CD4-positive, alpha-beta memory T cell (primary cell): ENCODE measurements at regions of chr1 and their contacts with region 1.

Region 1: DNA sequence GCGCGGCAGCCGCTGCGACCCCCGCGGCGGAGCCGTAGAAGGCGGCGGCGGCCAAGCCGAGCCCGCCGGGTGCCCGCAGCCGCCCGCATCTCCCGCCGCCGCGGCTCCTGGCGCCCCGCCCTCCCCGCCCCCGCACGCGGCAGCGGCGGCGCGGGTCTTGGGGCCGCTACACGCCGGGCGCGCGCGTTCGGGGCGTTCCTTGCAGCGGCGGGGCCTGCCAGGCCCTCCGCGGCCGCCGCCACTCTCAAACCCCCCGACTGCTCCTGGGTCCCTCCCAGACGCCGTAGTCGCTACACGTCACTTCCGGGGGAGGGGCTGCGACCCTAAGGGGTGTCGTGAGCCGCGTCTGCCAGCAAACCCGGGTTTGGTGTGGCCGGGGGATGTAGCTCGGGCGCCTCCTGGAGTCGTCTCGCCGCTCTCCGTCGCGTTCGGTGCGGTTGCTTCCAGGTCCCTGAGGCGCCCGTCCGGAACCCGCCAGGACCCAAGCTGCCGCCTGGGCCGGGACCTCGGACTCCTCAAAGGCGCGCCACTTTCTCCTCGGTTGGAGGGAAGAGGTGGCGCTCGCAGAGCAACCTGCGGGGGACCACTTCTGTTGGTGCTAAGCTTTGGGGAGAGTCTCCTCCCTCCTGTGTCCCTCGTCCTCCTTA is at the start of gene ELK4:
- DNase-seq: peak; percentile 99
- H3K4me3 ChIP-seq: peak within 1 kb of the TSS; percentile 72 to 87
- H3K4me3 Mint-ChIP-seq: peak within 1 kb of the TSS; percentile 92 to 99 (median 96)
- H3K27ac ChIP-seq: peak within 1 kb of the TSS; percentile 83
- H3K27ac Mint-ChIP-seq: peak within 1 kb of the TSS; percentile 92 to 99 (median 98)
- H3K4me1 ChIP-seq: peaks cover 47% of the 10 kb centered on the region
- H3K4me1 Mint-ChIP-seq: peaks cover 23 to 50% (median 38%) of the 10 kb centered on the region in 4 donors
- H3K27me3 ChIP-seq: no peaks in the 10 kb centered on the region
- H3K27me3 Mint-ChIP-seq: no peaks in the 10 kb centered on the region
- total RNA-seq, gene ELK4: 166 to 194 TPM

Region 2: GRCh38 chr1:204411451-204412204 is 1220.2 kb before region 1 on chr1 and contains the start of gene PPP1R15B:
- CTCF ChIA-PET with region 1: no interaction called
- POLR2A ChIA-PET with region 1: no interaction called
- intact Hi-C with region 1: loop called (anchors 10 kb)
- DNase-seq: peak; percentile 98 to 99 (median 98)
- H3K4me3 ChIP-seq: peak within 1 kb of the TSS; percentile 67 to 99
- H3K4me3 Mint-ChIP-seq: peak within 1 kb of the TSS; percentile 98 to 99 (median 99)
- H3K27ac ChIP-seq: peak within 1 kb of the TSS; percentile 100
- H3K27ac Mint-ChIP-seq: peak within 1 kb of the TSS; percentile 99 to 100 (median 100)
- H3K4me1 ChIP-seq: peaks cover 7% of the 10 kb centered on the region
- H3K4me1 Mint-ChIP-seq: peaks cover 8 to 21% (median 13%) of the 10 kb centered on the region in 4 donors
- H3K27me3 ChIP-seq: no peaks in the 10 kb centered on the region
- H3K27me3 Mint-ChIP-seq: no peaks in the 10 kb centered on the region
- total RNA-seq, gene PPP1R15B: 78.0 to 81.1 TPM

Region 3: GRCh38 chr1:205284343-205285144 is 347.3 kb before region 1 on chr1:
- CTCF ChIA-PET with region 1: no interaction called
- POLR2A ChIA-PET with region 1: interaction called, 5 read pairs
- intact Hi-C with region 1: loop called (anchors 2 kb)
- DNase-seq: peak; percentile 88 to 97 (median 90)
- H3K4me3 ChIP-seq: peak overlapping the region; percentile 56 to 71
- H3K4me3 Mint-ChIP-seq: peak overlapping the region; percentile 74 to 89 (median 84)
- H3K27ac ChIP-seq: peak overlapping the region; percentile 62
- H3K27ac Mint-ChIP-seq: peak overlapping the region; percentile 86 to 98 (median 95)
- H3K4me1 ChIP-seq: peaks cover 87% of the 10 kb centered on the region
- H3K4me1 Mint-ChIP-seq: peaks cover 64 to 89% (median 78%) of the 10 kb centered on the region in 4 donors
- H3K27me3 ChIP-seq: no peaks in the 10 kb centered on the region
- H3K27me3 Mint-ChIP-seq: no peaks in the 10 kb centered on the region

Region 4: GRCh38 chr1:205528887-205529825 is 102.7 kb before region 1 on chr1:
- CTCF ChIA-PET with region 1: interaction called, 12 read pairs
- POLR2A ChIA-PET with region 1: interaction called, 13 read pairs
- intact Hi-C with region 1: loop called (anchors 1 kb)
- DNase-seq: peak; percentile 66 to 76 (median 69)
- H3K4me3 ChIP-seq: no peak overlapping the region
- H3K4me3 Mint-ChIP-seq: peak overlapping the region in 5 of 8 donors; percentile 26 to 73 (median 39)
- H3K27ac ChIP-seq: no peak overlapping the region
- H3K27ac Mint-ChIP-seq: peak overlapping the region in 1 of 7 donors; percentile 73
- H3K4me1 ChIP-seq: no peaks in the 10 kb centered on the region
- H3K4me1 Mint-ChIP-seq: peaks cover 0 to 5% (median 4%) of the 10 kb centered on the region in 4 donors
- H3K27me3 ChIP-seq: no peaks in the 10 kb centered on the region
- H3K27me3 Mint-ChIP-seq: peaks cover 3 to 4% of the 10 kb centered on the region in 2 donors

Region 5: DNA sequence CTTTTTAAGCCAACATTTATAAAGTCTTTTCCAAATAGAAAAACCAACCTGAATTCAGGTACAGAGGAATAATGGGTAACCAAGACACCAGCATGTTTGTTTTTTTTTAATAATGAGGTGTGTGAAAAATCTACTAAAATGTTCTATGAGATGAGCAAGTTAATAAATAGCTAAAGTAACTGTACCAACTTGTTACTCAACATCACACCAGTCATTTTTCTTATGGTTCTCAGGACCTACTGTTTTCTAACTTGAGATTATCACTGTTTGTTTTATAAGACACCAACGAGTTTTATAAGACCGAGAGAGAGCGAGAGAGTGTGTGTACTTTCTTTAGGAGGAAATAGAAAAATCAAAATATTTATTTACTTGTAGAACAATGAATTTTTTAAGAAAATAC is 12.5 kb before region 1 on chr1:
- CTCF ChIA-PET with region 1: interaction called, 9 read pairs
- POLR2A ChIA-PET with region 1: interaction called, 30 read pairs
- intact Hi-C with region 1: no loop called
- DNase-seq: no peak
- H3K4me3 ChIP-seq: no peak overlapping the region
- H3K4me3 Mint-ChIP-seq: no peak overlapping the region
- H3K27ac ChIP-seq: no peak overlapping the region
- H3K27ac Mint-ChIP-seq: peak overlapping the region in 1 of 7 donors; percentile 64
- H3K4me1 ChIP-seq: no peaks in the 10 kb centered on the region
- H3K4me1 Mint-ChIP-seq: peaks cover 17 to 25% (median 22%) of the 10 kb centered on the region in 4 donors
- H3K27me3 ChIP-seq: no peaks in the 10 kb centered on the region
- H3K27me3 Mint-ChIP-seq: no peaks in the 10 kb centered on the region

Region 6: DNA sequence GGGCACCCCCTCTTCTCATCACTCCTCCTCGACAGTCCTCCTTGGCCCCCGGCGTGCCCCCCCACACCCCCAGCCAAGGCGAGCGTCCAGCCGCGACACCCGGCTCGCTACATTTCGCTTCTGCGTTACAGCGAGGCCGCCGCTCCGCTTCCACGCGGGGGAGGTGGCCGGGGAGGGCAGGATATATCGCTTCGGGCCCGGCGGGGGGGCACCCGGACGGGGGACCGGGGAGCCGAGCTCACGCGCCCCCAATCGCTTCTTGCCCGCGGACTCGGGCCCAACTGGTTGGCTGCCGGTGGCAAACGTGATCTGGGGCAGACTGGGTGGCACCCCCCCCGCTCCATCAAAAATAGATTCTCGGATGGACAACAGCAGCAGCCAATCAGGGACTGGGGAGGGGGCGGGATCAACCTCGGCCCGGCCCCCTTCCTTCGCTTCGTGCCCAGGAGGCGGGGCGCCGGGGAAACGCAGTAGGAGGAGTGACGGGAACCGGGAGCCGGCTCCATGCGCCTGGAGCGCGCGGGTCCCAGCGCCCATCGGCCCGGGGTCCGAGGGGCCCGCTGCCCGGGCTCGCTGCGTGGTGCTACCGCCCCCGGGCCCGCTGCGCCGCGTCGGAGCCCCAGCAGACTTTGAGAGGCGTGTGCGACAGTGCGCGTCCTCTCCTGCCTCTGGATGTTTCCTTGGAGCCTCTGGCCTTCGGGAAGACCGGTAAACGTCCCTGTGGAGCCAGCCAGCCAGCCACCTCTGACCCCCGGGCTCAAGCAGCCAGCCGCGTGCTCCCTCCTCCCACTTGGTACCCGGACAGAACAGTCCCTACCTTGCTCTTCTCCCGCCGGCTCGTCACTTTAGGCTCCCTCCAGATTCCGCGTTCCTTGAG is 181.3 kb after region 1 on chr1 and contains the start of gene SLC41A1:
- CTCF ChIA-PET with region 1: no interaction called
- POLR2A ChIA-PET with region 1: interaction called, 3 read pairs
- intact Hi-C with region 1: loop called (anchors 1 kb)
- DNase-seq: peak; percentile 90 to 96 (median 93)
- H3K4me3 ChIP-seq: peak within 1 kb of the TSS; percentile 71 to 88
- H3K4me3 Mint-ChIP-seq: peak within 1 kb of the TSS; percentile 91 to 96 (median 94)
- H3K27ac ChIP-seq: peak within 1 kb of the TSS; percentile 69
- H3K27ac Mint-ChIP-seq: peak within 1 kb of the TSS; percentile 82 to 95 (median 93)
- H3K4me1 ChIP-seq: peaks cover 54% of the 10 kb centered on the region
- H3K4me1 Mint-ChIP-seq: peaks cover 37 to 62% (median 49%) of the 10 kb centered on the region in 4 donors
- H3K27me3 ChIP-seq: no peaks in the 10 kb centered on the region
- H3K27me3 Mint-ChIP-seq: no peaks in the 10 kb centered on the region
- total RNA-seq, gene SLC41A1: 26.1 to 26.3 TPM